Endothelial cell of umbilical vein (primary cell): ENCODE measurements at regions of chr4 and their contacts with region 1.

Region 1: GRCh38 chr4:86977621-86978184 is 42.9 kb downstream of the AFF1 start:
- DNase-seq: peak; percentile 94
- H3K4me3 ChIP-seq: no peak overlapping the region
- H3K27ac ChIP-seq: peak overlapping the region; percentile 64
- H3K4me1 ChIP-seq: peaks cover 36% of the 10 kb centered on the region
- H3K27me3 ChIP-seq: no peaks in the 10 kb centered on the region
- CTCF ChIP-seq: no peak
- POLR2A ChIP-seq: no peak

Region 2: DNA sequence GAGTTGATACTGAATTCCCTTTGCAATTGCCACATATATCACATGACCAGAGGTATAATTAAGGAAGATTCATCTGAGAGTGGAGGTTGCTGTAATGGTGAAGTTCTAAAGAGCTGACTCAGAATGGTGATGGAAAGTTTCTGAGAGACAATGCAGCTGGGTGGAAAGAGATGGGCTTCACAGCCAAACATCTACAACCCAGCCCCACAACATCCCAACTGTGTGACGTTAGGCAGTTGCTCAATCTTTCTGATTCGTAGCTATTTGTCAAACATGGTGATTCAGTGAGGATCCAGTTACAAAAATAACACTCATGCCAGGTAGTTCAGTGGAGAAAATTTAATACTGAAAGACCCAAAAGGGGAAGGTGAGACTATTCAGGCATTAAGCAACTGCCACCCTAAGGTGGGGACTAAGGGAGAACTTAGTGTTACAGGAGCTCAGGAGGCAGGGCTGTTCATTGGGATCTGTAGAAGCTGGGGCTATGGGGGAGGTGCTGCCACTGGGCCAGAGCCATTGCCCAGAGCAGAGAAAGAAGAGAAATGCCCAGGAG is 49.8 kb before region 1 on chr4:
- CTCF ChIA-PET with region 1: interaction called, 6 read pairs
- POLR2A ChIA-PET with region 1: no interaction called
- dilution Hi-C with region 1: no loop called
- intact Hi-C with region 1: loop called (anchors 1 kb)
- DNase-seq: peak; percentile 43
- H3K4me3 ChIP-seq: no peak overlapping the region
- H3K27ac ChIP-seq: no peak overlapping the region
- H3K4me1 ChIP-seq: peaks cover 29% of the 10 kb centered on the region
- H3K27me3 ChIP-seq: no peaks in the 10 kb centered on the region
- CTCF ChIP-seq: no peak
- POLR2A ChIP-seq: no peak

Region 3: GRCh38 chr4:86934771-86935565 is 42.7 kb before region 1 on chr4 and contains the start of gene AFF1:
- CTCF ChIA-PET with region 1: interaction called, 10 read pairs
- POLR2A ChIA-PET with region 1: interaction called, 3 read pairs
- dilution Hi-C with region 1: no loop called
- intact Hi-C with region 1: loop called (anchors 1 kb)
- DNase-seq: peak; percentile 93
- H3K4me3 ChIP-seq: peak within 1 kb of the TSS; percentile 59 to 86 (median 84)
- H3K27ac ChIP-seq: peak within 1 kb of the TSS; percentile 89
- H3K4me1 ChIP-seq: peaks cover 42% of the 10 kb centered on the region
- H3K27me3 ChIP-seq: no peaks in the 10 kb centered on the region
- CTCF ChIP-seq: peak; percentile 15 to 28
- POLR2A ChIP-seq: peak; percentile 91
- total RNA-seq, gene AFF1: 80.7 and 106 TPM in 2 replicates

Region 4: DNA sequence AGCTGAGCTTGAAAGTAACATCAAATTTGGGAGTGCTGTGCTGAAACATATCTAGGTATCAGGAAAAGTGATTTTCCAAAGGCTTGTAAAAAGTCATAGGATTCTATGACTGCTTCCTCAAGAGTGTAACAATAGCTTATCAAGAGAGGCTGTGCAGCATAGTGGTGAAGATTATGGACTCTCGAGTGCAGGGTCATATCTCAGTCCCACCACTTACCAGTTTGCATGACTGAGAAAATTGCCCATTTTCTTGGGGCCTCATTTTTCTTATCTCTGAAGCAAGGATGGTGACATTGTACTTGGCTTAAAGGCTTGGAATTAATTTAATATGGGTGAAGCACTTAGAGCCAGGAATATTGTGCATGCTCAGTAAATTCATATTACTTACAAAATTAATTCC is 14.3 kb after region 1 on chr4:
- CTCF ChIA-PET with region 1: interaction called, 3 read pairs
- POLR2A ChIA-PET with region 1: no interaction called
- dilution Hi-C with region 1: no loop called
- intact Hi-C with region 1: loop called (anchors 2 kb)
- DNase-seq: no peak
- H3K4me3 ChIP-seq: no peak overlapping the region
- H3K27ac ChIP-seq: no peak overlapping the region
- H3K4me1 ChIP-seq: no peaks in the 10 kb centered on the region
- H3K27me3 ChIP-seq: no peaks in the 10 kb centered on the region
- CTCF ChIP-seq: no peak
- POLR2A ChIP-seq: no peak